ENCODE measurements at regions of chr3 and their contacts with region 1.

Region 1: GRCh38 chr3:124688581-124689454 is 41.4 kb upstream of the UMPS start:
- DNase-seq: peak; percentile 89
- H3K4me3 Mint-ChIP-seq: no peak overlapping the region
- H3K27ac Mint-ChIP-seq: no peak overlapping the region
- H3K4me1 Mint-ChIP-seq: peaks cover 9% of the 10 kb centered on the region
- H3K27me3 Mint-ChIP-seq: peaks cover 13% of the 10 kb centered on the region

Region 2: GRCh38 chr3:124492811-124493210 is 196.0 kb before region 1 on chr3:
- CTCF ChIA-PET with region 1: interaction called, 3 read pairs
- intact Hi-C with region 1: loop called (anchors 5 kb)
- DNase-seq: peak; percentile 30
- H3K4me3 Mint-ChIP-seq: no peak overlapping the region
- H3K27ac Mint-ChIP-seq: no peak overlapping the region
- H3K4me1 Mint-ChIP-seq: peaks cover 7% of the 10 kb centered on the region
- H3K27me3 Mint-ChIP-seq: peaks cover 15% of the 10 kb centered on the region

Region 3: GRCh38 chr3:124559881-124560574 is 128.8 kb before region 1 on chr3:
- CTCF ChIA-PET with region 1: interaction called, 238 read pairs
- intact Hi-C with region 1: loop called (anchors 1 kb)
- DNase-seq: peak; percentile 82
- H3K4me3 Mint-ChIP-seq: no peak overlapping the region
- H3K27ac Mint-ChIP-seq: no peak overlapping the region
- H3K4me1 Mint-ChIP-seq: no peaks in the 10 kb centered on the region
- H3K27me3 Mint-ChIP-seq: peaks cover 17% of the 10 kb centered on the region

Region 4: DNA sequence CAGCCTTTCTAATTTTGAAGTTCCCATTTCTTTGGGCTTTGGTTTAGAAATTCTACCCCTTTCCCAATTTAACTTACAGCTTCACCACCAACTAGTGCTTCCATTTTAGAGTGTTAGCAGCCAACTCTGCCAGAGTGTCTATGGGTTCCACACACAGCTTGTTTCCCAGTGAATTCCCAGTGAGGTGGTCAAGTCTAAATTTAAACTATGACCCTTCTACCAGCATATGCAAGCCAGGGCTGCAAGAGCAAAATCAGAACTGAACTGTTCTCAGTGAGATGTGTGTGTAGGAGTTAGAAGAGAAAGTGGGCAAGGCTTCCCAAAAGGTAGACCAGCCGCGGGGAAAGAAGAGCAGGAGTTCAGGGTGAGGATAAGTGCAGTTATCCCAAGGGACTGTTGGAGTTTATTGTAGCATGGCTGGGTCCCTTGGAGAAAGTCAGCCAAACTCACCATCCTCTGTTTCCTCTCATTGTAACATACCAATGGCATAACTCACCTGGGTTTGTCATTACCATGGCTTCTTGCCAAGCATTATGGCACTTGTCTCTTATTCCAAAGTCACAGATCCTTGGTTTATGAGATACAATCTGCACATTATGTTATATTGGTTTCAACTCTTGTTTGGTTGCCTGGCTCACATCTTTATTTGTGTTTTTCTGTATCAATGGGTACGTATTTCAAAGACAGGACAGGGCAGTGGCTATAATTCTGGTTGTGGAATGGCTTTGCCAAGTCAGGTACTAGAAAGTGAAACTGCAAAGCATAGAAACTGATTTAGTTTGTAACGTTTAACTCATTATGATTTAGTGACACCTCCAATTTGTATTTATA is 88.8 kb before region 1 on chr3:
- CTCF ChIA-PET with region 1: interaction called, 10 read pairs
- intact Hi-C with region 1: no loop called
- DNase-seq: no peak
- H3K4me3 Mint-ChIP-seq: no peak overlapping the region
- H3K27ac Mint-ChIP-seq: no peak overlapping the region
- H3K4me1 Mint-ChIP-seq: no peaks in the 10 kb centered on the region
- H3K27me3 Mint-ChIP-seq: peaks cover 3% of the 10 kb centered on the region

Region 5: GRCh38 chr3:124639406-124640237 is 49.2 kb before region 1 on chr3:
- CTCF ChIA-PET with region 1: interaction called, 8 read pairs
- intact Hi-C with region 1: loop called (anchors 5 kb)
- DNase-seq: peak; percentile 39
- H3K4me3 Mint-ChIP-seq: peak overlapping the region; percentile 2
- H3K27ac Mint-ChIP-seq: peak overlapping the region; percentile 77
- H3K4me1 Mint-ChIP-seq: peaks cover 29% of the 10 kb centered on the region
- H3K27me3 Mint-ChIP-seq: no peaks in the 10 kb centered on the region

Region 6: DNA sequence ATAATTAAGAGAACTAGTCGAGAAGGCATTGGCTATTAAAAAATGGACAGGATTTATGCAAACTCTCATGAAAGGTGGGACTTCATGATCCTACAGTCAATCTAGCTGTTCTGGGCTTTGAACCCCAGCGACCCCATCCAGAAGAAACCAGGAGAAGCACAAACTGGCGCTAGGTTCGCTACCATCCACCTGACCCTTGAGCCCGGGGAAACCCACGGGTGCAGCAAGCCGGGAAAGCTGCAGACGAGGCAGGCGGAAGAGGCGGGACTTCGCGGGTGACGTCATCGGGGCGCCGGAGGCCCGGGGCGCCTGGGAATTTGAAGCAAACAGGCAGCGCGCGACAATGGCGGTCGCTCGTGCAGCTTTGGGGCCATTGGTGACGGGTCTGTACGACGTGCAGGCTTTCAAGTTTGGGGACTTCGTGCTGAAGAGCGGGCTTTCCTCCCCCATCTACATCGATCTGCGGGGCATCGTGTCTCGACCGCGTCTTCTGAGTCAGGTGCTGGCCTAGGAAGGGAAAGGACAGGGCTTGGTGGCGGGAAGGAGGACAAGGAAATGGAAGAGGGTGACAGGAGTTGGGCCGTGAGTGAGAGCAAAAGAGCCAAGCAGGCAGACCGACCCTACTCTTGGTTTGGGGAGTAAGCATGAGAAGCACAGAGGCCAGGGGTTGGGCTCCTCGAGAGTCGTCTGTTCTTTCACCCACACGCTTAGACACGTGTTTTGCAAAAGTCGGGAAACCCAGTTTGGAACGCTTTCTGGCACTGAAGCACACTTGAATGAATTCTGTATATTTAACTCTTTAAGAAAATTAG is 41.5 kb after region 1 on chr3 and contains the start of gene UMPS:
- CTCF ChIA-PET with region 1: interaction called, 12 read pairs
- intact Hi-C with region 1: no loop called
- DNase-seq: peak; percentile 96
- H3K4me3 Mint-ChIP-seq: peak within 1 kb of the TSS; percentile 99
- H3K27ac Mint-ChIP-seq: peak within 1 kb of the TSS; percentile 95
- H3K4me1 Mint-ChIP-seq: peaks cover 33% of the 10 kb centered on the region
- H3K27me3 Mint-ChIP-seq: peaks cover 7% of the 10 kb centered on the region
- total RNA-seq, gene UMPS: 29.6 to 34.1 TPM